Naive thymus-derived CD4-positive, alpha-beta T cell (primary cell): ENCODE measurements at regions of chr5 and their contacts with region 1.

Region 1: DNA sequence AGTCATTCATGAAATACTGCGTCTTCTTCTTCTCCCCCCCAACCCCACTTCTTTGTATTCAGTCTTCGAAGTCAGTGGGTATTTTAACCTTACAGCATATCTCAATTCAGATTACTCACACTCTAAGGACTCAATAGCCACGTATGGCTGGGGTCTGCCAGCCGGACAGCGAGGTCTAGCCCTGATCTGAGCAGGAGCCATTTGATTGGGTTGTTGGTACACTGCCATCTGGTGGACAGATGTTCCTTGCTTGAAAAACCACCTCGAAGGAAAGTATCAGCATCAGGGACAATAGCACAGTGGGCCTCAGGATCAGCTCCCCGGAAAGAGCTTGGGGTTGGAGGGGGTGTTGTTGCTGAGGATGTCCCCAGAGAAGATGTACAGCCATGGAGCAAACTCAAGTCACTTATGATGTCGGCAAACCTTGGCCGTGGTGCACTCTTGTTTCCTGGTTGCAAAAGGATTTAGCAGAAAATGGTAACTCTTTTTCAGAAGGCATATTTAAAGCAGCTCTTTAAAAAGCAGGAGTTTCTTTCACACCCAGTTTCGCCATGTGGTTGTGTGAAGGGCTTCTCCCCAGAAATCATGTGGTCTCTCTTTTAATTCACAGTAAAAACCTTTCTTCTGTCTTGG is 31.7 kb upstream of the KCNMB1 start:
- DNase-seq: peak; percentile 18 to 66 (median 48)
- ATAC-seq: peak; percentile 80
- H3K4me3 ChIP-seq: no peak overlapping the region
- H3K4me3 Mint-ChIP-seq: no peak overlapping the region
- H3K27ac ChIP-seq: no peak overlapping the region
- H3K27ac Mint-ChIP-seq: peak overlapping the region in 1 of 9 donors; percentile 1
- H3K4me1 ChIP-seq: peaks cover 10 to 19% of the 10 kb centered on the region in 2 donors
- H3K4me1 Mint-ChIP-seq: peaks cover 3 to 34% (median 30%) of the 10 kb centered on the region in 7 donors
- H3K27me3 ChIP-seq: no peaks in the 10 kb centered on the region
- H3K27me3 Mint-ChIP-seq: peaks cover 0 to 35% (median 0%) of the 10 kb centered on the region in 5 donors

Region 2: DNA sequence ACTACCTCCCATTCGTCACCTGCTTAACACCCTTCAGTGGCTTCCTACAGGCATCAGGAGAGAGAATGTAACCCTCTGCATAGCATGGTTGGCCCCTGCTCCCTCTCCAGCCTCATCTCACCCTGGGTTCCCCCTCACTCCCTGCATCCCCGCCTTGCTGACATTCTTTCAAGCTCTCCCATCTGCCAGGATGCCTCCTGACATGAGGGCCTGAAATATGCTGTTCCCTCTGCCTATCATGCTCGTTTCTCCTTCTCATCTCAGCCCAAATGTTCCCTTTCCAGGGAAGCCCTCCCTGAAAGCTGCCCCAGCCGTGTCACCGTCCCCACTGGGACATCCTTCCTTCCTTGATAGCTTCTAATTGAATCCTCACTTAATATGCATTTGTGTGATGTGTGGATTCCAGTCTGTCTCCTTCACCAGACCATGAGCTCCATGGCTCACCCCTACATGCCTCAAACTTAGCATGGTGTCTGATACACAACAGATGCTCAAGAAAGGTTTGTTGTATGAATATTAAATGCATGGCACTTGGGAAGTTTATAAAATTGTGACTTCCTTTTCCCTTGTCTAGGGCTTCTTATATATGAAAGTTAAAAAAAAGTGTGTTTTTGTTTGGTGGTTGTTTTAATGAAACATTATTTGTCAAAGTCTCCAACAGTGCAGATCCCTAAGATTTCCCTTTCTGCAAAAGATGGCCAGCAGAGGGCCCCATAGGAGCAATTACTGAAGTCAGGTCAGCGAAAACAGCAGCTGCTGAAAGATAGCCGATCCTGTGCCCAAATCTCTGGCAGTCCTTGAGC is 195.4 kb before region 1 on chr5:
- CTCF ChIA-PET with region 1: interaction called, 9 read pairs
- POLR2A ChIA-PET with region 1: no interaction called
- intact Hi-C with region 1: loop called (anchors 1 kb)
- DNase-seq: peak; percentile 45 to 78 (median 69)
- ATAC-seq: peak; percentile 75
- H3K4me3 ChIP-seq: no peak overlapping the region
- H3K4me3 Mint-ChIP-seq: peak overlapping the region in 1 of 10 donors; percentile 15
- H3K27ac ChIP-seq: no peak overlapping the region
- H3K27ac Mint-ChIP-seq: peak overlapping the region in 3 of 9 donors; percentile 31 to 75 (median 61)
- H3K4me1 ChIP-seq: no peaks in the 10 kb centered on the region
- H3K4me1 Mint-ChIP-seq: peaks cover 0 to 11% (median 5%) of the 10 kb centered on the region in 7 donors
- H3K27me3 ChIP-seq: no peaks in the 10 kb centered on the region
- H3K27me3 Mint-ChIP-seq: no peaks in the 10 kb centered on the region

Region 3: GRCh38 chr5:170393235-170393634 is 27.7 kb before region 1 on chr5:
- CTCF ChIA-PET with region 1: interaction called, 4 read pairs
- POLR2A ChIA-PET with region 1: no interaction called
- intact Hi-C with region 1: loop called in 1 of 2 experiments (anchors 2 kb)
- DNase-seq: peak in 8 of 9 donors; percentile 4 to 38 (median 22)
- ATAC-seq: peak; percentile 82
- H3K4me3 ChIP-seq: no peak overlapping the region
- H3K4me3 Mint-ChIP-seq: peak overlapping the region; percentile 53 to 80 (median 72)
- H3K27ac ChIP-seq: peak overlapping the region; percentile 44
- H3K27ac Mint-ChIP-seq: peak overlapping the region; percentile 44 to 89 (median 77)
- H3K4me1 ChIP-seq: peaks cover 0 to 12% of the 10 kb centered on the region in 2 donors
- H3K4me1 Mint-ChIP-seq: peaks cover 16 to 35% (median 24%) of the 10 kb centered on the region in 7 donors
- H3K27me3 ChIP-seq: no peaks in the 10 kb centered on the region
- H3K27me3 Mint-ChIP-seq: peaks cover 0 to 37% (median 0%) of the 10 kb centered on the region in 5 donors

Region 4: GRCh38 chr5:170633235-170634081 is 212.6 kb after region 1 on chr5:
- CTCF ChIA-PET with region 1: no interaction called
- POLR2A ChIA-PET with region 1: no interaction called
- intact Hi-C with region 1: no loop called
- DNase-seq: peak in 6 of 9 donors; percentile 5 to 51 (median 30)
- ATAC-seq: peak; percentile 28
- H3K4me3 ChIP-seq: peak overlapping the region; percentile 40
- H3K4me3 Mint-ChIP-seq: peak overlapping the region; percentile 68 to 92 (median 88)
- H3K27ac ChIP-seq: no peak overlapping the region
- H3K27ac Mint-ChIP-seq: peak overlapping the region in 8 of 9 donors; percentile 22 to 90 (median 72)
- H3K4me1 ChIP-seq: peaks cover 0 to 10% of the 10 kb centered on the region in 2 donors
- H3K4me1 Mint-ChIP-seq: peaks cover 8 to 26% (median 19%) of the 10 kb centered on the region in 7 donors
- H3K27me3 ChIP-seq: no peaks in the 10 kb centered on the region
- H3K27me3 Mint-ChIP-seq: peaks cover 0 to 12% (median 1%) of the 10 kb centered on the region in 5 donors